ENCODE measurements at regions of chr5 and their contacts with region 1.

Region 1: DNA sequence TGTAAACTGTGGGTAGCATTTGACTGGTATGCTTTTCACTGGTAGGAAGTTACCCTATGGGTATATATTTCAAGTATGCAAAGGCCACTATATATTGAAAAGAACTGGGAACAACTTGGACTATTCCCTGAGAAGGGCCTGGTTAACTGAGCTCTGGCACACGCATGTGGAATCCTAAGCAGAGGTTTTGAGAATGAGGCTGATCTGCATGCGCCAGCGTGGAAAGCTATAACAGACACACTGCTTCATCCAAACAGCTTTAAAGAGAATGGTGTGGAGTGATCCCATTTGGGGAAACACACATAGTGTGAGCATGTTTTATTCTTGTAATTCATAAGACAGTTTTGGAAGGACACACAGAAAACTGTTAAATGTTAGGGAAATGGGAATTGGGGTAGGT is 8.4 kb downstream of the NSG2 start:
- DNase-seq: no peak

Region 2: GRCh38 chr5:174306345-174307030 is 252.6 kb after region 1 on chr5:
- intact Hi-C with region 1: loop called in 1 of 2 experiments (anchors 5 kb)
- DNase-seq: no peak